Stomach (tissue), 19 donors: ENCODE measurements at regions of chr5 and their contacts with region 1.

Region 1: GRCh38 chr5:103232393-103232999 is 26.1 kb upstream of the MACIR start:
- DNase-seq: peak in 1 of 2 donors; percentile 63
- H3K4me3 ChIP-seq: no peak overlapping the region
- H3K27ac ChIP-seq: no peak overlapping the region
- H3K4me1 ChIP-seq: no peaks in the 10 kb centered on the region
- H3K27me3 ChIP-seq: no peaks in the 10 kb centered on the region
- CTCF ChIP-seq: peak in 5 of 7 experiments; percentile 64 to 84 (median 80)
- EP300 ChIP-seq: no peak
- POLR2A ChIP-seq: no peak

Region 2: GRCh38 chr5:103475629-103476240 is 243.2 kb after region 1 on chr5:
- intact Hi-C with region 1: loop called (anchors 5 kb)
- DNase-seq: peak in 1 of 2 donors; percentile 72
- H3K4me3 ChIP-seq: no peak overlapping the region
- H3K27ac ChIP-seq: no peak overlapping the region
- H3K4me1 ChIP-seq: no peaks in the 10 kb centered on the region
- H3K27me3 ChIP-seq: no peaks in the 10 kb centered on the region
- CTCF ChIP-seq: peak in 4 of 7 experiments; percentile 55 to 62 (median 59)
- EP300 ChIP-seq: no peak
- POLR2A ChIP-seq: no peak

Region 3: GRCh38 chr5:103657301-103657700 is 424.8 kb after region 1 on chr5:
- intact Hi-C with region 1: no loop called
- DNase-seq: no peak
- H3K4me3 ChIP-seq: no peak overlapping the region
- H3K27ac ChIP-seq: no peak overlapping the region
- H3K4me1 ChIP-seq: no peaks in the 10 kb centered on the region
- H3K27me3 ChIP-seq: no peaks in the 10 kb centered on the region
- CTCF ChIP-seq: no peak
- EP300 ChIP-seq: no peak
- POLR2A ChIP-seq: no peak